HepG2 (cell line): ENCODE measurements at regions of chr4 and their contacts with region 1.

Region 1: DNA sequence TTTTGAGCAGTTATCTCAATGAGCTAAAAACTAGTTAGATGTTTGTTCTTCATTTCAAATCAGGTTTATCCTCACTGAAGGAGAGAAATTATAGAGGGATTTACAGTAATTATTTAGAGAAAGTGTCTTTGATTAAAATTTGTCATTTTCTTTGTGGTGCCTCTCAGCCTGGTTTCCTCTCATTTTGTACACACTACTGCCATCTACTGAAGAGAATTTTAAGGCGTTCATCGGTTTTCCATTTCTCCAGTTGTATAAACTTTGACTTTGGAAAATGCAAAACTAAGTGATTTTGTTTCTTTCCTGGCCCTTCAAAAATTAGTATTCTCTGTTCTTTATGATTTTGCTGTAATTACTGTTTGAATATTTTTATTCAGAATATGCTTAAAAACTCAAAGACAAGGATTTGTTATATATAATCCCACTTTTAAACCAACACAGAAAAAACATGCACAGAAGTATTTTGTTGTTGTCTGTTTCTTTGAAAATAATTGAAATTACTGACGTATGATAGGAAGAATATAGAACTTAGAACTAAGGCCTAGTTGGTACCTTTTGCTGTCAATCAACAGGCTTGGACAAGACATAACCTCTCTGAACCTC is 34.4 kb upstream of the ANXA3 start:
- DNase-seq: peak; percentile 11
- ATAC-seq: no peak
- H3K4me3 ChIP-seq: no peak overlapping the region
- H3K27ac ChIP-seq: no peak overlapping the region
- H3K4me1 ChIP-seq: peaks cover 23% of the 10 kb centered on the region
- H3K27me3 ChIP-seq: no peaks in the 10 kb centered on the region
- CTCF ChIP-seq: peak; percentile 65
- EP300 ChIP-seq: no peak
- POLR2A ChIP-seq: no peak
- RAD21 ChIP-seq: peak; percentile 34; the same call in 1 of the 2 replicates

Region 2: GRCh38 chr4:77994194-77994721 is 522.9 kb before region 1 on chr4:
- CTCF ChIA-PET with region 1: interaction called, 3 read pairs
- POLR2A ChIA-PET with region 1: no interaction called
- in situ Hi-C with region 1: no loop called
- intact Hi-C with region 1: loop called (anchors 1 kb)
- DNase-seq: peak; percentile 84
- ATAC-seq: peak; percentile 95
- H3K4me3 ChIP-seq: peak overlapping the region in 1 of 3 experiments; percentile 13; a peak in 1 of 6 replicates
- H3K27ac ChIP-seq: no peak overlapping the region
- H3K4me1 ChIP-seq: peaks cover 60% of the 10 kb centered on the region
- H3K27me3 ChIP-seq: no peaks in the 10 kb centered on the region
- CTCF ChIP-seq: peak; percentile 83
- EP300 ChIP-seq: no peak
- POLR2A ChIP-seq: no peak
- RAD21 ChIP-seq: peak; percentile 54; the same call in 1 of the 2 replicates

Region 3: GRCh38 chr4:78569291-78569821 is 52.2 kb after region 1 on chr4:
- CTCF ChIA-PET with region 1: no interaction called
- POLR2A ChIA-PET with region 1: no interaction called
- in situ Hi-C with region 1: no loop called
- intact Hi-C with region 1: no loop called
- DNase-seq: peak; percentile 31
- ATAC-seq: no peak
- H3K4me3 ChIP-seq: no peak overlapping the region
- H3K27ac ChIP-seq: no peak overlapping the region
- H3K4me1 ChIP-seq: peaks cover 33% of the 10 kb centered on the region
- H3K27me3 ChIP-seq: no peaks in the 10 kb centered on the region
- CTCF ChIP-seq: no peak
- EP300 ChIP-seq: no peak
- POLR2A ChIP-seq: no peak
- RAD21 ChIP-seq: no peak

Region 4: GRCh38 chr4:78691971-78692821 is 175.0 kb after region 1 on chr4:
- CTCF ChIA-PET with region 1: no interaction called
- POLR2A ChIA-PET with region 1: no interaction called
- in situ Hi-C with region 1: no loop called
- intact Hi-C with region 1: no loop called
- DNase-seq: no peak
- ATAC-seq: no peak
- H3K4me3 ChIP-seq: no peak overlapping the region
- H3K27ac ChIP-seq: no peak overlapping the region
- H3K4me1 ChIP-seq: no peaks in the 10 kb centered on the region
- H3K27me3 ChIP-seq: no peaks in the 10 kb centered on the region
- CTCF ChIP-seq: no peak
- EP300 ChIP-seq: no peak
- POLR2A ChIP-seq: no peak
- RAD21 ChIP-seq: no peak

Region 5: GRCh38 chr4:78784236-78784865 is 267.2 kb after region 1 on chr4:
- CTCF ChIA-PET with region 1: no interaction called
- POLR2A ChIA-PET with region 1: no interaction called
- in situ Hi-C with region 1: no loop called
- intact Hi-C with region 1: no loop called
- DNase-seq: no peak
- ATAC-seq: no peak
- H3K4me3 ChIP-seq: no peak overlapping the region
- H3K27ac ChIP-seq: no peak overlapping the region
- H3K4me1 ChIP-seq: peaks cover 45% of the 10 kb centered on the region
- H3K27me3 ChIP-seq: no peaks in the 10 kb centered on the region
- CTCF ChIP-seq: no peak
- EP300 ChIP-seq: no peak
- POLR2A ChIP-seq: no peak
- RAD21 ChIP-seq: no peak